Caco-2 (cell line): ENCODE measurements at regions of chr17 and their contacts with region 1.

Region 1: GRCh38 chr17:6749519-6749918 is 6.3 kb upstream of the XAF1 start:
- DNase-seq: no peak
- H3K4me3 ChIP-seq: no peak overlapping the region
- H3K4me3 Mint-ChIP-seq: no peak overlapping the region
- H3K27ac Mint-ChIP-seq: no peak overlapping the region
- H3K4me1 ChIP-seq: no peaks in the 10 kb centered on the region
- H3K4me1 Mint-ChIP-seq: no peaks in the 10 kb centered on the region
- H3K27me3 ChIP-seq: no peaks in the 10 kb centered on the region
- H3K27me3 Mint-ChIP-seq: no peaks in the 10 kb centered on the region
- CTCF ChIP-seq: no peak

Region 2: GRCh38 chr17:6843241-6843880 is 93.8 kb after region 1 on chr17:
- CTCF ChIA-PET with region 1: no interaction called
- POLR2A ChIA-PET with region 1: no interaction called
- intact Hi-C with region 1: loop called (anchors 5 kb)
- DNase-seq: no peak
- H3K4me3 ChIP-seq: no peak overlapping the region
- H3K4me3 Mint-ChIP-seq: no peak overlapping the region
- H3K27ac Mint-ChIP-seq: no peak overlapping the region
- H3K4me1 ChIP-seq: no peaks in the 10 kb centered on the region
- H3K4me1 Mint-ChIP-seq: no peaks in the 10 kb centered on the region
- H3K27me3 ChIP-seq: no peaks in the 10 kb centered on the region
- H3K27me3 Mint-ChIP-seq: peaks cover 3% of the 10 kb centered on the region
- CTCF ChIP-seq: peak; percentile 20 to 25